ENCODE measurements at regions of chr11 and their contacts with region 1.

Region 1: DNA sequence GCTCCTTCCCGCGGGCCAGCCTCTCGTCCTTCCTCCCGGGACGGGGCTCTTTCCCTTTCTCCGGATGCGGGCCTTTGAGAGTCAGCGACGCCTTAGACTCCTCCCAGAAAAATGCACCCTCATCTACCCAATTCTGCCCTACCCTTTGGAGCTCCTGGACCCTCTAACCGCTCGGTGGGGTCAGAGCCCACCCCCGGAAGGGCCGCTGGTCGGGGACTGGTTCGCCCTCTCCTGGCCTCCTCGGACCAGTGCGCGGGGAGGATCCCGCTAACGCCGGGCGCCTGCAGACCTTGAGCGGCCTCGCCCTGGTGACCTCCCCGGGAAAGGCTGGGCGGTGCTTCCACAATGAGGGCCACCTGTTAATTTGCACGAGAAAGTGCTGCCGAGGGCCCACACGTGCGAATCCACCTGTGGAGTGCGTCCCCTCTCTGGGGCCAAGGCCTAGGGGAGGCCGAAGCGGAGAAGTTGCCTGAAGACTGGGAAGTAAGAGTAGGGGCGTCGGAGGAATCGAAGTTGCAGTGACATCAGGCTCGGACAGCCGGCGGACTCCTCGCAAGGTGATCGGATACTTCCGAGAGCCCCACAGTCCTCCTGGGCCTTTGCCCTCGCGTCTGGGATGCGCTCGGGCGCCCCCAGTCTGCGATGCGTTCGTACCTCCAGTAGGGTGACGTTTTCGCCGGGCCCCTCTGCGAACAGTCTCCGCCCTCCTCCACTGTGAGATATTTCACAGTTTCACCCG is 61.5 kb downstream of the ENDOD1 start:
- DNase-seq: peak; percentile 83 to 96 (median 88)
- ATAC-seq: peak; percentile 92
- H3K4me3 ChIP-seq: peak overlapping the region; percentile 74
- H3K4me3 Mint-ChIP-seq: peak overlapping the region; percentile 92
- H3K27ac ChIP-seq: peak overlapping the region; percentile 69 to 72
- H3K27ac Mint-ChIP-seq: peak overlapping the region; percentile 97
- H3K4me1 ChIP-seq: peaks cover 49% of the 10 kb centered on the region
- H3K4me1 Mint-ChIP-seq: peaks cover 37% of the 10 kb centered on the region
- H3K27me3 ChIP-seq: no peaks in the 10 kb centered on the region
- H3K27me3 Mint-ChIP-seq: peaks cover 4% of the 10 kb centered on the region
- CTCF ChIP-seq: peak; percentile 97

Region 2: GRCh38 chr11:94794287-94795168 is 356.6 kb before region 1 on chr11:
- CTCF ChIA-PET with region 1: no interaction called
- POLR2A ChIA-PET with region 1: no interaction called
- intact Hi-C with region 1: loop called in 1 of 2 experiments (anchors 10 kb)
- DNase-seq: no peak
- ATAC-seq: no peak
- H3K4me3 ChIP-seq: no peak overlapping the region
- H3K4me3 Mint-ChIP-seq: no peak overlapping the region
- H3K27ac ChIP-seq: no peak overlapping the region
- H3K27ac Mint-ChIP-seq: no peak overlapping the region
- H3K4me1 ChIP-seq: no peaks in the 10 kb centered on the region
- H3K4me1 Mint-ChIP-seq: no peaks in the 10 kb centered on the region
- H3K27me3 ChIP-seq: peaks cover 0 to 6% of the 10 kb centered on the region in 2 experiments
- H3K27me3 Mint-ChIP-seq: peaks cover 6% of the 10 kb centered on the region
- CTCF ChIP-seq: no peak

Region 3: GRCh38 chr11:95089620-95090542 is 61.2 kb before region 1 on chr11 and contains the start of gene ENDOD1:
- CTCF ChIA-PET with region 1: interaction called, 3 read pairs
- POLR2A ChIA-PET with region 1: interaction called, 50 read pairs
- intact Hi-C with region 1: loop called (anchors 1 to 2 kb)
- DNase-seq: peak; percentile 70 to 94 (median 84)
- ATAC-seq: peak; percentile 94
- H3K4me3 ChIP-seq: peak within 1 kb of the TSS; percentile 78
- H3K4me3 Mint-ChIP-seq: peak within 1 kb of the TSS; percentile 92
- H3K27ac ChIP-seq: peak within 1 kb of the TSS; percentile 77 to 84
- H3K27ac Mint-ChIP-seq: peak within 1 kb of the TSS; percentile 95
- H3K4me1 ChIP-seq: peaks cover 34% of the 10 kb centered on the region
- H3K4me1 Mint-ChIP-seq: peaks cover 50% of the 10 kb centered on the region
- H3K27me3 ChIP-seq: no peaks in the 10 kb centered on the region
- H3K27me3 Mint-ChIP-seq: no peaks in the 10 kb centered on the region
- CTCF ChIP-seq: no peak
- total RNA-seq, gene ENDOD1: 3.8 to 4.4 TPM

Region 4: DNA sequence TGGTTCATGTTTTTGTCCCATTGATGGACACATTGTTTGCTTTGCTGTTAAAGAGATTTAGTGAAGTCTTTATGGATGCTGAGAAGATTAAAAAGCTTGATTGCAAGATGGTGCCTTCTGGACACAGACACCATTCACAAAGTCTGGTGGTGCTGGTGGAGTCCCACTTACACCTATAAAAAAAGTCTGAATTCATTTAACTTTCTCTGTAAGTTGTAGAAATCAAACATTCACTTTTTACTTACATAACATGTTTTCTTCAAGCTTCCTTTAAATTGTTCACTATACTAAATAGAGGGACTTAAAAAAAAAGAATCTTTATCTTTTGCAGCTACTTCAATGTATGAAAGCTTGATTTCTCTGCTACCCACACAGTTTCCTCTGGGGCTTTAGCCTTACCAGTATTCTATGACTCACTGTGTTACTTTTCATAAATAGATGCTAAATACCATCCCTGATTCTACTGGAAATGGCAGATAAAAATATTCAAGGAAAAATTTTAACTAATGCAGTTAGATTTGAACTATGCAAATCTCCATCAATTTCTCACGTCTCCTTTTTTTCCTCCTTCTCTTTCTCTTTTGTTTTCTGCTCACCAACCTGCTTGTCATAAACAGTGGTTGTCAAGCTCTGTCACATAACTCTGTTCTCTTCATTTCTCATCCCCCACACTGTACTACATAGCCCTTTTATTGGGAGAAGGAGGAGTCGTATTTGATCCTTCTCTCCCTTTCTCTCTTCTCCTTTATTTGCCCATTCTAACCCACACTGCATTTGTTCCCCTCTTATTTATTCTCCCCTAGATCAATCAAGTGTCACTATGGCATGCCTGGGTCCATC is 548.7 kb after region 1 on chr11:
- CTCF ChIA-PET with region 1: interaction called, 65 read pairs
- POLR2A ChIA-PET with region 1: interaction called, 53 read pairs
- intact Hi-C with region 1: loop called (anchors 1 kb)
- DNase-seq: peak in 4 of 14 experiments; percentile 33 to 60 (median 52)
- ATAC-seq: peak; percentile 82
- H3K4me3 ChIP-seq: peak overlapping the region; percentile 45
- H3K4me3 Mint-ChIP-seq: peak overlapping the region; percentile 66
- H3K27ac ChIP-seq: peak overlapping the region; percentile 78 to 87
- H3K27ac Mint-ChIP-seq: peak overlapping the region; percentile 92
- H3K4me1 ChIP-seq: peaks cover 56% of the 10 kb centered on the region
- H3K4me1 Mint-ChIP-seq: peaks cover 48% of the 10 kb centered on the region
- H3K27me3 ChIP-seq: no peaks in the 10 kb centered on the region
- H3K27me3 Mint-ChIP-seq: no peaks in the 10 kb centered on the region
- CTCF ChIP-seq: no peak

Region 5: DNA sequence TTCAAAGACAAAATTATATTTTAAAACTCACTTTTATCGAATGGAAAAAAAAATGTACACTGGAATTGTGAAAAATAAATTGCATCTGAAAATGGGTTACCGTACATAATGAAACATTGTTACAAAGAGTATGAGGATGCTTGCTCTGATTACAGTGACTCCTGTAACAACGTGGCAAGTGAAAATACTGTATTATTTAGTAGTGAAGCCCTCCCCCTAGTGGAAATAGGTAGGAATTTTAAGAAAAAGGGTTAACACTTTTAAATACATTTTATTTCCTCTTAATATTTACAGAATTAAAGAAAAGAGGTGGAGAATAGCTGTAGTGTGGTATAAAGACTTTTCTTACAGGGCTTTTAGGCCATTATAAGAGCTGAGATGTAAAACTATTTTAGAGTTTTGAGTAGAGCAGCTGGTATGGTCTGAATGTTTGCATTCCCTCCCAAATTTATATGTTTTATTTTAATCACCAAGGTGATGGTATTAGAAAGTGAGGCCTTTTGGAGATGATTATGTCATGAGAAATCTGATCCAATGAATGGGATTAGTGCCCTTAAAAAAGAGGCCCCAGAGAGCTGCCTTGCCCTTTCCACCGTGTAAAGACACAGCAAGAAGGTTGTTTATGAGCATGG is 613.3 kb after region 1 on chr11:
- CTCF ChIA-PET with region 1: interaction called, 13 read pairs
- POLR2A ChIA-PET with region 1: interaction called, 7 read pairs
- intact Hi-C with region 1: loop called (anchors 1 kb)
- DNase-seq: peak in 3 of 14 experiments; percentile 73 to 76 (median 75)
- ATAC-seq: peak; percentile 91
- H3K4me3 ChIP-seq: no peak overlapping the region
- H3K4me3 Mint-ChIP-seq: no peak overlapping the region
- H3K27ac ChIP-seq: no peak overlapping the region
- H3K27ac Mint-ChIP-seq: no peak overlapping the region
- H3K4me1 ChIP-seq: no peaks in the 10 kb centered on the region
- H3K4me1 Mint-ChIP-seq: no peaks in the 10 kb centered on the region
- H3K27me3 ChIP-seq: no peaks in the 10 kb centered on the region
- H3K27me3 Mint-ChIP-seq: no peaks in the 10 kb centered on the region
- CTCF ChIP-seq: peak; percentile 80

Region 6: DNA sequence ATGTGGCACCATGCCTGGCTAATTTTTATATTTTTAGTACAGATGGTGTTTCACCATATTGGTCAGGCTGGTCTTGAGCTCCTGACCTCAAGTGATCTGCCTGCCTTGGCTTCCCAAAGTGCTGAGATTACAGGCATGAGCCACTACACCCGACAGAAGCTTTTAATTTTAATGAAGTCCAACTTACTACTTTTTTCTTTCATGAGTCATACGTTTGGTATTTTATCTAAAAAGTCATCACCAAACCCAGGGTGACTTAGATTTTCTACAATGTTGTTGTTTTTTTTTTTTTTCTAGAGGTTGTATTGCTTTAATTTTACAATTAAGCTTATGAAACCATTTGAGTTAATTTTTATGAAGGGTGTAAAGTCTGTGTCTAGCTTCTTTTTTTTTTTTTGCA is 1273.6 kb after region 1 on chr11:
- CTCF ChIA-PET with region 1: interaction called, 3 read pairs
- POLR2A ChIA-PET with region 1: no interaction called
- intact Hi-C with region 1: loop called (anchors 5 kb)
- DNase-seq: no peak
- ATAC-seq: no peak
- H3K4me3 ChIP-seq: no peak overlapping the region
- H3K4me3 Mint-ChIP-seq: no peak overlapping the region
- H3K27ac ChIP-seq: no peak overlapping the region
- H3K27ac Mint-ChIP-seq: no peak overlapping the region
- H3K4me1 ChIP-seq: no peaks in the 10 kb centered on the region
- H3K4me1 Mint-ChIP-seq: no peaks in the 10 kb centered on the region
- H3K27me3 ChIP-seq: peaks cover 0 to 22% of the 10 kb centered on the region in 2 experiments
- H3K27me3 Mint-ChIP-seq: peaks cover 34% of the 10 kb centered on the region
- CTCF ChIP-seq: no peak